Endothelial cell of umbilical vein (primary cell): ENCODE measurements at regions of chr1 and their contacts with region 1.

Region 1: DNA sequence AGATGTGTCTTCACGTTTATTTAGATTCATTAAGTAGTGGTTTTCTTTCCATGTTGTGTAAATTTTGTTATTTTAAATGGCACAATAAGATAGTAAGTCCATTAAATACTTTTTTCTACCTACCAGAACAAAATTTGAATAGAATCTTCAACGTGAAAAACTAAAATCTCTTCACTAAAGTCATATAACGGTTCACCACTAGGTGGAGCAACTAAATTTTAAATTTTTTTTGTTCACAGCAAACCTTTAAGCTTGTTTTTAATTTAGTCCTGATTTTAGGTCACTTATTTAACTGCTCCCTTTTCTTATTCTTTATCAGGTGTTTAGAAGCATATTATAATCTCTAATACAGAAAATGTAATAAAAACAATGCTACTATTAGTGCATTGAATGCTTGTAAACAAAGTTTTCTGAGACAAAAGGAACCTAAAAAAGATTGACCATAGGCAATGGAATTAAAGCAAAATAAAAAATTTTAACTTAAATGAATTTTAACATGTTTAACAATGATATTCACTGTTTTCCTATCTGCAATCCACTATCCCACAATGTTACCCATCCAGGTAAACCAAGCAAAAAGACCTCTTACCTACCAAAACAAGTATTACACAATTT is 28.3 kb upstream of the PKN2 start:
- DNase-seq: peak; percentile 56
- H3K4me3 ChIP-seq: no peak overlapping the region
- H3K27ac ChIP-seq: no peak overlapping the region
- H3K4me1 ChIP-seq: no peaks in the 10 kb centered on the region
- H3K27me3 ChIP-seq: no peaks in the 10 kb centered on the region
- CTCF ChIP-seq: peak; percentile 31 to 39
- POLR2A ChIP-seq: no peak

Region 2: GRCh38 chr1:88371396-88371795 is 284.4 kb before region 1 on chr1:
- CTCF ChIA-PET with region 1: no interaction called
- POLR2A ChIA-PET with region 1: no interaction called
- dilution Hi-C with region 1: no loop called
- intact Hi-C with region 1: no loop called
- DNase-seq: no peak
- H3K4me3 ChIP-seq: no peak overlapping the region
- H3K27ac ChIP-seq: no peak overlapping the region
- H3K4me1 ChIP-seq: no peaks in the 10 kb centered on the region
- H3K27me3 ChIP-seq: peaks cover 0 to 3% of the 10 kb centered on the region in 2 experiments
- CTCF ChIP-seq: no peak
- POLR2A ChIP-seq: no peak

Region 3: GRCh38 chr1:88529581-88529980 is 126.2 kb before region 1 on chr1:
- CTCF ChIA-PET with region 1: no interaction called
- POLR2A ChIA-PET with region 1: no interaction called
- dilution Hi-C with region 1: no loop called
- intact Hi-C with region 1: no loop called
- DNase-seq: no peak
- H3K4me3 ChIP-seq: no peak overlapping the region
- H3K27ac ChIP-seq: no peak overlapping the region
- H3K4me1 ChIP-seq: no peaks in the 10 kb centered on the region
- H3K27me3 ChIP-seq: no peaks in the 10 kb centered on the region
- CTCF ChIP-seq: no peak
- POLR2A ChIP-seq: no peak

Region 4: DNA sequence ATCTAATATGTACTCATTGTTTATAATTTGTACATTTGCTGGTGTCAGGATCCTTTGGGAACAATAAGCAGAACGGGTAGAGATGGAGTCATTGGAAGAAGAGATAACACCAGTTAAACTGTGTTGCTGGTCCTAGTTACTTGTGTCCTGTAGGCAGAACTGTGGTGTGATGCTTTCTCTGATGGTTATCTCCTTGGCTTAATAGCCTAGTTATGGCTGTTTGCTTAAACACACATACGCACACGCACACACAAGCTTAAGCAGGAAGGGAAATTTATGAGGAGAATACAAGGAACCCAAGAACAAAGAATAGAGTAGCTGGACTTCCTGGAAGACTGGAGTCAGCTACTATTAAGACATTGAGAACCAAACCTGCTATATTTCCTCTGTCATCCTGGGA is 22.6 kb after region 1 on chr1:
- CTCF ChIA-PET with region 1: interaction called, 66 read pairs
- POLR2A ChIA-PET with region 1: no interaction called
- dilution Hi-C with region 1: no loop called
- intact Hi-C with region 1: no loop called
- DNase-seq: peak; percentile 37
- H3K4me3 ChIP-seq: no peak overlapping the region
- H3K27ac ChIP-seq: no peak overlapping the region
- H3K4me1 ChIP-seq: peaks cover 12% of the 10 kb centered on the region
- H3K27me3 ChIP-seq: no peaks in the 10 kb centered on the region
- CTCF ChIP-seq: no peak
- POLR2A ChIP-seq: no peak

Region 5: DNA sequence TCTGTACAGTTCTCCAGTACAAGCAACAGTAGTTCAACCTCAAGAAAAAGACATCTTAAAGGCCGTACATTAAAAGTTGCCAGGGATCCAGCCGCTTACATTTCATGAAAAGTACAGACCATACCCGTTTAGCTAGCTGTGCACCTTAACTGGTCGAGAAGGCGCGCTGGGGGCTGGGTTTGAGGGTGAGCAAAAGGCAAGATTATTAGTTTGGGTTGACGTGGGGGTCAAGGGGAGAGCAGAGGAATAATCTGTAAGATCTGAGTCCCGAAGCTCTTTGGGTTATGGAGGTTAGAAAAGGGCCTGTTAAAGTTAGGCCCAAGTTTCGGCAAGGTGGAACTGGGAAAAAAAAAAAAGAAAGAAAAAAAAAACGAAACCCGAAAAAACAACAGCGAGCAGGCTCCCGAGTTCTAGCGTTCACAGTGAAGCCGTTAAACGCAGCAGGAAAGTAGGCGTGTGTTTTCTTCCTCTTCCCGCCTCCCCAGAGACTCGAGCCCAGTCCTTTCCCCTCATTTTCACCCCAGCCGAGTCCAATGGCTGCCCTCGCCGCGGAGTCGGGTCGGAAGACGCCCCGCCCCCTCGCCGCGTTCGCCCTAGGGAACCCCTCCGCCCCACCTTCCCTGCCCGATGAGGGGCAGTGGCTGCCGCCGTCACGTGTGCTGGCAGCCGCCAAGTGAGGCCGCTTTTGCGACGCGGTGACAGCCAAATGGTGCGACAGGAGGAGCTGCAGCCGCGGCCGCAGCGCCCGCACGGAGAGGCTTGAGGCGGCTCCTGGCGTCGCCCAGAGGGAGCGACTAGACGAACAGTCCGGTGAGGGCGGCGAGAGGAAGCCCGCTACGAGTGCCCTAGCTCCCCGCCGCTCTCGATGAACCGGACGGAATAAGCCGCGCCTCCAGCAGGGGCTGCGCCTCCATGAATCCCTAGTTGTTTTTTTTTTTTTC is 28.0 kb after region 1 on chr1 and contains the start of gene PKN2:
- CTCF ChIA-PET with region 1: interaction called, 66 read pairs
- POLR2A ChIA-PET with region 1: no interaction called
- dilution Hi-C with region 1: no loop called
- intact Hi-C with region 1: no loop called
- DNase-seq: peak; percentile 100
- H3K4me3 ChIP-seq: peak within 1 kb of the TSS; percentile 91 to 100 (median 98)
- H3K27ac ChIP-seq: peak within 1 kb of the TSS; percentile 64
- H3K4me1 ChIP-seq: peaks cover 32% of the 10 kb centered on the region
- H3K27me3 ChIP-seq: no peaks in the 10 kb centered on the region
- CTCF ChIP-seq: peak in 1 of 2 donors; percentile 14
- POLR2A ChIP-seq: peak; percentile 94
- total RNA-seq, gene PKN2: 47.3 and 49.1 TPM in 2 replicates

Region 6: GRCh38 chr1:88731475-88732269 is 75.9 kb after region 1 on chr1:
- CTCF ChIA-PET with region 1: interaction called, 14 read pairs
- POLR2A ChIA-PET with region 1: no interaction called
- dilution Hi-C with region 1: no loop called
- intact Hi-C with region 1: no loop called
- DNase-seq: peak; percentile 85
- H3K4me3 ChIP-seq: no peak overlapping the region
- H3K27ac ChIP-seq: no peak overlapping the region
- H3K4me1 ChIP-seq: peaks cover 7% of the 10 kb centered on the region
- H3K27me3 ChIP-seq: no peaks in the 10 kb centered on the region
- CTCF ChIP-seq: no peak
- POLR2A ChIP-seq: no peak

Region 7: DNA sequence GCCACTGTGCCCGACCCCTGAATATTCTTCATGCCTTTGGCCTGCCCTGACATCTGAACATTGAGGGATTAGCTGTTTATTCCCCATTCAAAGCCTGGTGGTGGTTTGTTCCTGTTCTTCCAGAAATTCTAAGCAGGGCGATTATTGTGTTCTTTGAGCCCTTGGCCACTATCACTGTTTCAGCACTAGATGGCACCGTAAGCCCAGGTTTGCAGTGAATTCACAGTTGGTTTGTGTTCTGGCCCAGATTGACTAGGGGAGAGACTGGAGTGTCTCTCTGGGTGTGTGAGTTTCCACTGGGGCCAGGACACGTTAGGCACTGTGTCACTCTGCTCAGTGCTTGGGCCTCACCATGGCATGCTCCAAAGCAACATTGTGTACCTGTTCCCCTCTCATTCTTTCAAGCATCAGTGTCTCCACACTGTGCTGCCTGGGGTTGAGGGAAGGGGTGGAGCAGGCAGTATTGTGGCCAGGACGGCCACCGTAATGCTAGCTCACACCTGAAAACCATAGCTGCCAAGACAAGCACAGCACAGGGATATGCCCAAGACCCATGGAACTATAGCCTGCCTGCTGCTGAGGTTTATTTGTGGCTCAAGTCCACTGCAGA is 81.0 kb after region 1 on chr1:
- CTCF ChIA-PET with region 1: interaction called, 14 read pairs
- POLR2A ChIA-PET with region 1: no interaction called
- dilution Hi-C with region 1: no loop called
- intact Hi-C with region 1: no loop called
- DNase-seq: peak; percentile 31
- H3K4me3 ChIP-seq: no peak overlapping the region
- H3K27ac ChIP-seq: no peak overlapping the region
- H3K4me1 ChIP-seq: peaks cover 5% of the 10 kb centered on the region
- H3K27me3 ChIP-seq: no peaks in the 10 kb centered on the region
- CTCF ChIP-seq: peak; percentile 56 to 69
- POLR2A ChIP-seq: no peak

Region 8: GRCh38 chr1:88800382-88801051 is 144.7 kb after region 1 on chr1:
- CTCF ChIA-PET with region 1: interaction called, 3 read pairs
- POLR2A ChIA-PET with region 1: no interaction called
- dilution Hi-C with region 1: no loop called
- intact Hi-C with region 1: loop called (anchors 5 kb)
- DNase-seq: peak; percentile 24
- H3K4me3 ChIP-seq: no peak overlapping the region
- H3K27ac ChIP-seq: no peak overlapping the region
- H3K4me1 ChIP-seq: peaks cover 3% of the 10 kb centered on the region
- H3K27me3 ChIP-seq: no peaks in the 10 kb centered on the region
- CTCF ChIP-seq: peak; percentile 54 to 57
- POLR2A ChIP-seq: no peak

Region 9: DNA sequence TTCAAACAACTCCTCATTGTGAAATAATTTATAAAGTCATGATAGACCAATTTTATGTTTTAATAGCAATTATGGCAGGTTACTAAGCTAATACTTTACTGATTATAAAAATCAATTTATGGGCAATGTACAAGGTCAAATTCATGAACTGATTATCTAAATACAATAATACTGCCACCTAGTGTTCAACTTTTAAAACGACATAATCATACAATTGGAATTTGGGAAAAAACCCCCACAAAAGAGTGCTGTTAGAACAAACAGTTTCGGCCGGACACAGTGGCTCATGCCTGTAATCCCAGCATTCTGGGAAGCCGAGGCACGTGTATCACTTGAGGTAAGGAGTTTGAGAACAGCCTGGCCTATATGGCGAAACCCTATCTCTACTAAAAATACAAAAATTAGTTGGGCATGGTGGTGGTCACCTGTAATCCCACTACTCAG is 221.6 kb after region 1 on chr1:
- CTCF ChIA-PET with region 1: interaction called, 108 read pairs
- POLR2A ChIA-PET with region 1: interaction called, 3 read pairs
- dilution Hi-C with region 1: no loop called
- intact Hi-C with region 1: loop called (anchors 1 kb)
- DNase-seq: peak; percentile 46
- H3K4me3 ChIP-seq: no peak overlapping the region
- H3K27ac ChIP-seq: no peak overlapping the region
- H3K4me1 ChIP-seq: no peaks in the 10 kb centered on the region
- H3K27me3 ChIP-seq: no peaks in the 10 kb centered on the region
- CTCF ChIP-seq: peak; percentile 14 to 25
- POLR2A ChIP-seq: no peak